Heart left ventricle (tissue), 16 donors: ENCODE measurements at regions of chr17 and their contacts with region 1.

Region 1: GRCh38 chr17:58119491-58119890 is 28.7 kb upstream of the OR4D1 start:
- DNase-seq: no peak
- ATAC-seq: no peak
- H3K4me3 ChIP-seq: no peak overlapping the region
- H3K27ac ChIP-seq: no peak overlapping the region
- H3K4me1 ChIP-seq: no peaks in the 10 kb centered on the region
- H3K27me3 ChIP-seq: peaks cover 0 to 19% (median 0%) of the 10 kb centered on the region in 9 donors
- CTCF ChIP-seq: no peak
- POLR2A ChIP-seq: no peak

Region 2: DNA sequence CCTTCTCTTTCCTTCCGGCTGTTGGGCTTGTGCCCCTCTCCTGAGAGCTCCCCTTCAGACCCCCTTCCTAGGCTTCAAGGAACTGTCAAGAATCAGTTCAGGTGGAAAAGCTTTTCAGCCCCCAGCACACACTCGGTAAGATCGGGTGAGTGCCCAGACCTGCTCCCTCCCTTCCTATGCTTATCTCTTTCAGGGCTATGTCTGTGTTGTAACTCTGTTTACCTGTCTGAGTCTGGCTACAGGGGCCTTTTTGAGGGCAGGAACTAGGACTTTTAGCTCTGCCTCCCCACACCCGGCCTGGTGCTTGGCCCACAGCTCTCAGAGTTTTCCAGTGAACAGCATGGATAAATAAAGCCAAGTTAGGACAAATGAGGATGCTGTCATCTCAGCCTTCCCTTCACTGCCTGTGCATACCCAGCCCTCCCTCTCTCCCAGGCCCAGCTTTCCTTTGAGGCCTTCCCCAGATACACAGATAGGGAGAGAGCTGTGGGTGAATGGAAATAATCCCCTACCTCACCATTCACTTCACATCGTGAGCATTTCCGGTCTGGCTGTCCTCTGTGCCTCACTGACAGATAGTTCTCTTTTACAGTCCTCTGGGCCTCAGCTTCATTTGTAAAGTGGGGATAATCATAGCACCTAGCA is 264.0 kb before region 1 on chr17:
- intact Hi-C with region 1: loop called in 7 of 10 experiments (anchors 5 kb)
- DNase-seq: no peak
- ATAC-seq: no peak
- H3K4me3 ChIP-seq: no peak overlapping the region
- H3K27ac ChIP-seq: peak overlapping the region in 7 of 12 donors; percentile 32 to 97 (median 92)
- H3K4me1 ChIP-seq: peaks cover 0 to 57% (median 34%) of the 10 kb centered on the region in 12 donors
- H3K27me3 ChIP-seq: no peaks in the 10 kb centered on the region
- CTCF ChIP-seq: no peak
- POLR2A ChIP-seq: no peak

Region 3: GRCh38 chr17:58046239-58047094 is 73.0 kb before region 1 on chr17:
- intact Hi-C with region 1: no loop called
- DNase-seq: peak in 3 of 5 donors; percentile 42 to 51 (median 49)
- ATAC-seq: peak; percentile 55 to 91 (median 82)
- H3K4me3 ChIP-seq: no peak overlapping the region
- H3K27ac ChIP-seq: peak overlapping the region in 7 of 12 donors; percentile 23 to 63 (median 40)
- H3K4me1 ChIP-seq: peaks cover 0 to 6% (median 1%) of the 10 kb centered on the region in 12 donors
- H3K27me3 ChIP-seq: peaks cover 0 to 11% (median 0%) of the 10 kb centered on the region in 9 donors
- CTCF ChIP-seq: no peak
- POLR2A ChIP-seq: no peak